ENCODE measurements at regions of chr5 and their contacts with region 1.

Region 1: DNA sequence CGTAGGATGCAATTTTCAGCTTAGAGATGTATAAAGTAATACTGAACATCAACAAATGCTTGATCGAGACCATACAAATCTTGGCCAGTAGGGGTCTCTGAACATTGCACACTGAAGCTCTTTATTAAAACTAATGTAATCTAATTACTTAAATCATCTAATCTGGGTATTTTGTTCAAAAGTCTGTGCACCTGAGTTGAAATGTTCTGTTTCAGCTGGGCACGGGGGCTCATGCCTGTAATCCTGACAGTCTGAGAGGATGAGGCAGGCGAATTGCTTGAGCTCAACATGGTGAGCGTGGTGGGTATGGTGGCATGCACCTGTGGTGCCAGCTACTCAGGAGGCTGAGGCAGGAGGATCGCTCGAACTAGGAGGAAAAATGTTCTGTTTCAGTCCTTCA is 41.0 kb downstream of the ESM1 start:
- DNase-seq: peak; percentile 75
- H3K4me3 ChIP-seq: no peak overlapping the region
- H3K27ac ChIP-seq: no peak overlapping the region
- H3K4me1 ChIP-seq: peaks cover 10% of the 10 kb centered on the region
- H3K27me3 ChIP-seq: no peaks in the 10 kb centered on the region
- CTCF ChIP-seq: peak; percentile 44 to 55
- POLR2A ChIP-seq: no peak

Region 2: DNA sequence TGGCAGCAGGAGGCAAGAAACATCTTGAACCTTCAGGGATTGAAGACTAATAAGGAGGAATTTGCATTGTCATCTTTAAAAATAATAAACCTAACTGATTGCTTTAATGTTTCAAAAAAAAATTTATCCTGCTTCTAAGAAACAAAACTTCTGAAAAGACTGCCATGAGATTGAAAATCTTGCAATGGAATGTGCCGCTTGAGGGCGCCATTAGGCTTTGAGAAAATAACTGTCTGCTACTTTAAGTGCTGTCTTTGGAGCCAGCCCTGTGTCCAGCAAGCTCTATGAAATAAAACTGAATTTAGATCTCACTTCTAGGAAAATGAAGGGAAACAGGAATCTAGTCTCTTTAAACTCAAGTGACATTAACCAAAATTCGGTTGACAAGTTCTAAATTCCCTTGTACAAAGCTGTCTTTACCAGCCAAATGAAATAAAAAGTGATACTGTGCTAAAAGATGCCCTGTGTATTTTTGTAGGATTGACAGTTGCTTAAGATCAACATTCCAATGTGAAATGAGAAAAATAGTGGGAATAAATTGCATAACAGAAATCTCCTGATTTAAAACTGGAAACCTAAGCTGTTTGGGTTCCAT is 38.3 kb before region 1 on chr5:
- CTCF ChIA-PET with region 1: interaction called, 139 read pairs
- POLR2A ChIA-PET with region 1: interaction called, 3 read pairs
- dilution Hi-C with region 1: no loop called
- intact Hi-C with region 1: loop called (anchors 1 kb)
- DNase-seq: peak; percentile 91
- H3K4me3 ChIP-seq: peak overlapping the region in 1 of 3 experiments; percentile 7
- H3K27ac ChIP-seq: no peak overlapping the region
- H3K4me1 ChIP-seq: peaks cover 39% of the 10 kb centered on the region
- H3K27me3 ChIP-seq: no peaks in the 10 kb centered on the region
- CTCF ChIP-seq: peak; percentile 59 to 63
- POLR2A ChIP-seq: no peak

Region 3: DNA sequence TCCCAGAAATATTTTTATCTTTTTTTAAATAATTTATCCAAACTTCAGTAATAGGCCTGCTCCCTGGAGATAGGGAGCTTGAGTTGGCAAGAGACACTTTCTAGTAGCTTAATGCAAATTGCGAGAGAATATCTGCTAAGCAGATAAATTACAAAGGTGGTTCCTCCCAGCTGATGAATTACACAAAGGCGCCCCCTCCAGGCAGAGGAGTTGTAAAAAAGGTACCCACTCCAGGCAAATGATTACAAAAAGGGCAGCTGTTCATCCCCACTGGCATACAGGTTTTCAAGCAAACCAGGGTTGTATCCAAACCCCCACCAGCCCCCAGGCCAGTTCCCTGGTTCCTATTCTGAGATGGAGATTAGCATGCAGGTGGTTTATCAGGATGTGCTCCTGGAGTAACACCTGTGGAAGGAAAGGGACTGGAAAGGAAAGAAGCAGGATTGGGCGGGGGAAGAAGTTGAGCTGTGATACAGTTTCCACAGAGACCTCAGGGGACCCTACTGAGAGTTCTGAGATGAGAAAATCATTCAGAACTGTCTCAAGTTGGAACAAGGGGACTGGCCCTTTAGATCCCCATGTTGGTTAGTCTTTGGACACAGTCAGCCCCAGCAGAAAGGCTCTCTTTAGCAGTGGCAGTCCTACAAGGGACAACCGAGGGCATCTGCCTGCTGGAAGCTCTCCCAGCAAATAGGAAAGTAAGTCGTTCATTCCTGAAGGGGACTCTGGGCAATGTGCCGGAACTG is 15.5 kb after region 1 on chr5:
- CTCF ChIA-PET with region 1: interaction called, 180 read pairs
- POLR2A ChIA-PET with region 1: no interaction called
- dilution Hi-C with region 1: no loop called
- intact Hi-C with region 1: no loop called
- DNase-seq: peak; percentile 57
- H3K4me3 ChIP-seq: no peak overlapping the region
- H3K27ac ChIP-seq: no peak overlapping the region
- H3K4me1 ChIP-seq: peaks cover 2% of the 10 kb centered on the region
- H3K27me3 ChIP-seq: no peaks in the 10 kb centered on the region
- CTCF ChIP-seq: peak; percentile 50
- POLR2A ChIP-seq: no peak

Region 4: GRCh38 chr5:54985301-54986268 is 41.2 kb after region 1 on chr5 and contains the start of gene ESM1:
- CTCF ChIA-PET with region 1: interaction called, 115 read pairs
- POLR2A ChIA-PET with region 1: interaction called, 6 read pairs
- dilution Hi-C with region 1: no loop called
- intact Hi-C with region 1: loop called (anchors 1 kb)
- DNase-seq: peak; percentile 99
- H3K4me3 ChIP-seq: peak within 1 kb of the TSS; percentile 69 to 99 (median 97)
- H3K27ac ChIP-seq: peak within 1 kb of the TSS; percentile 99
- H3K4me1 ChIP-seq: peaks cover 45% of the 10 kb centered on the region
- H3K27me3 ChIP-seq: no peaks in the 10 kb centered on the region
- CTCF ChIP-seq: peak; percentile 28 to 34
- POLR2A ChIP-seq: peak; percentile 92
- total RNA-seq, gene ESM1: 577 and 781 TPM in 2 replicates

Region 5: DNA sequence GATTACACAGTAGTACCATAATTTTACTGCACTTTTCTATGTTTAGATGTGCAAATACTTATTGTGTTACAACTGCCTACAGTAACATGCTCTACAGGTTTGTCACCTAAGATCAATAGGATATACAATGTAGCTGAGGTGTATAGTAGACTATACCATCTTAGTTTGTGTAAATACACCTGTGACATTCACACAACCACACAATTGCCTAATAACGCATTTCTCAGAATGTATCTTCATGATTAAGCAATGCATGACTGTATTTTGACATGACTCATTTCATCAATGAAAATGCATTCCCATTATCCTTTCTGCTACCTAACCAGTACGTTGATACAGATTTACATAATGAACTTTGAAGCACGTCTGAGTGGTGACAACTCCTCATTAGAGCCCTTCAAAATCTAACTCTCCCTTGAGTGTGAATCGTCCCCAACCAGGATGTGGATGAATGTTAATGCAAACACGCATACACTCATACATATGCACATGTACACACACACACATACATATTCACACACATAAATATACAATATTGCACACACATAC is 108.1 kb after region 1 on chr5:
- CTCF ChIA-PET with region 1: interaction called, 11 read pairs
- POLR2A ChIA-PET with region 1: no interaction called
- dilution Hi-C with region 1: no loop called
- intact Hi-C with region 1: no loop called
- DNase-seq: no peak
- H3K4me3 ChIP-seq: no peak overlapping the region
- H3K27ac ChIP-seq: no peak overlapping the region
- H3K4me1 ChIP-seq: no peaks in the 10 kb centered on the region
- H3K27me3 ChIP-seq: no peaks in the 10 kb centered on the region
- CTCF ChIP-seq: no peak
- POLR2A ChIP-seq: no peak

Region 6: DNA sequence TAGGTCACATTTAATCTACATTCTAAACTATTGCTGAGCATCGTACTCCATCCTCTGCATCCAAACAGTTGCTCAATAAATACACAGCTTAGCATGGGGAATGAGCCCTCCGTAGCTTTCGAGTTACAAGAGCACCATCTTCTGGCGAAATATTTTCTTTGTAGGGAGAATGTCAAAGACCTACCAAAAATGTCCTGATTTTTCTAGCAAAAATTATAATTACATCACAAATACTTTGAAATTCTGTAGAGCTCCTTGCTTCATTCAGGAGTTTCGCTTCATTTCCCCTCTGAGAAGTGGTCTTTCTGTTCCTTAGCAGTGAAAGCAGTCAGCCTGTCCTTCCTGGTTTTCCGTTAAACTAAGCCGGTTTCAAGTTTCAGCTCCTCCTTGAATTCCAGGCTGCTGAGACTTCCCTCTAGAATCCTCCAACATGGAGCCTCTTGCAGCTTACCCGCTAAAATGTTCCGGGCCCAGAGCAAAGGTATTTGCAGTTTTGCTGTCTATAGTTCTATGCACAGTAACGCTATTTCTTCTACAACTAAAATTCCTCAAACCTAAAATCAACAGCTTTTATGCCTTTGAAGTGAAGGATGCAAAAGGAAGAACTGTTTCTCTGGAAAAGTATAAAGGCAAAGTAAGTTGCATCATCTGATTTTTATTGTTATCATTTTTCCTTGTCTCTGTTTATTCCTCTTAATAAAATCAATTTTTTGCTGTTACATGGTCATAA is 215.6 kb after region 1 on chr5 and contains the start of gene GPX8:
- CTCF ChIA-PET with region 1: interaction called, 166 read pairs
- POLR2A ChIA-PET with region 1: no interaction called
- dilution Hi-C with region 1: no loop called
- intact Hi-C with region 1: loop called (anchors 1 kb)
- DNase-seq: peak; percentile 89
- H3K4me3 ChIP-seq: peak within 1 kb of the TSS; percentile 66 to 100 (median 96)
- H3K27ac ChIP-seq: peak within 1 kb of the TSS; percentile 89
- H3K4me1 ChIP-seq: peaks cover 53% of the 10 kb centered on the region
- H3K27me3 ChIP-seq: no peaks in the 10 kb centered on the region
- CTCF ChIP-seq: peak; percentile 42 to 46
- POLR2A ChIP-seq: peak; percentile 88
- total RNA-seq, gene GPX8: 147 and 161 TPM in 2 replicates

Region 7: GRCh38 chr5:55758231-55758630 is 813.9 kb after region 1 on chr5:
- CTCF ChIA-PET with region 1: no interaction called
- POLR2A ChIA-PET with region 1: no interaction called
- dilution Hi-C with region 1: no loop called
- intact Hi-C with region 1: no loop called
- DNase-seq: no peak
- H3K4me3 ChIP-seq: no peak overlapping the region
- H3K27ac ChIP-seq: no peak overlapping the region
- H3K4me1 ChIP-seq: no peaks in the 10 kb centered on the region
- H3K27me3 ChIP-seq: no peaks in the 10 kb centered on the region
- CTCF ChIP-seq: no peak
- POLR2A ChIP-seq: no peak

Region 8: GRCh38 chr5:55982957-55983381 is 1038.6 kb after region 1 on chr5:
- CTCF ChIA-PET with region 1: no interaction called
- POLR2A ChIA-PET with region 1: no interaction called
- dilution Hi-C with region 1: no loop called
- intact Hi-C with region 1: no loop called
- DNase-seq: no peak
- H3K4me3 ChIP-seq: no peak overlapping the region
- H3K27ac ChIP-seq: no peak overlapping the region
- H3K4me1 ChIP-seq: peaks cover 3% of the 10 kb centered on the region
- H3K27me3 ChIP-seq: no peaks in the 10 kb centered on the region
- CTCF ChIP-seq: peak in 1 of 2 donors; percentile 12
- POLR2A ChIP-seq: no peak

Measured in endothelial cell of umbilical vein (primary cell).